Activated CD8-positive, alpha-beta T cell treated with anti-CD3 and anti-CD28 coated beads for 36 hours (primary cell): ENCODE measurements at regions of chr6 and their contacts with region 1.

Region 1: DNA sequence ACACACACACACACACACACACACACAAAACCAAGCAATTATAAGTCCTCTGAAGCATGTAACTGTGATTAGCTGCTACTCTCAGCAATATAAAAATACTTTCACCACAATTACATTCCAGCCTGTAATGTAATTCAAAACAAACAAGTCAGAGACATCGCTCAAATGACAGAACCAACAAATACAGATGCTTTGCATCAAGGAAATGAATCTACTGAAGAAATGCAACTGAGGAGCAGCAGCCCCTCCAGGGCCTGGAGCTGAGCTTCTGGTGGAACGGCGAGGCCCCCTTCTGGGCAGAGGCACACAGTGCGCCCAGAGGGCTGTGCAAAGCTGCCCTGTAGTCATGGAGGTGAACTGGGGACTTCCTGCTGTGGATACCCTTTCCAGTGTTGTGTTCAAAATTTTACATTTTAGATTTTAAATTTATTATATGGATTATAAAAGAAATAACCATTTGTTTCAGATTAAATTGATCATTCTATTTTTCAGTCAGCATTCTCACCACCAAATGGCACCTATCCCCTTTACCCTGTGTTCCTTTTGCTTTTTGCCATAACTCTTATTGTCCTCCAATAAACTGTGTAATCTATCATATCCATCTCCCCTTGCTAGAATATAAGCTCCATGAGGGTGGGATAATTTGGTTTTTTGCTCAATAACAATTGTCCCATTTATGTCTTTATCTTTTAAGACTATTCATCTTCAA is 23.2 kb downstream of the ADAT2 start:
- DNase-seq: peak; percentile 80
- ATAC-seq: peak; percentile 100
- H3K4me3 Mint-ChIP-seq: no peak overlapping the region
- H3K27ac Mint-ChIP-seq: no peak overlapping the region
- H3K4me1 Mint-ChIP-seq: peaks cover 5% of the 10 kb centered on the region
- H3K27me3 Mint-ChIP-seq: no peaks in the 10 kb centered on the region
- CTCF ChIP-seq: peak; percentile 95

Region 2: DNA sequence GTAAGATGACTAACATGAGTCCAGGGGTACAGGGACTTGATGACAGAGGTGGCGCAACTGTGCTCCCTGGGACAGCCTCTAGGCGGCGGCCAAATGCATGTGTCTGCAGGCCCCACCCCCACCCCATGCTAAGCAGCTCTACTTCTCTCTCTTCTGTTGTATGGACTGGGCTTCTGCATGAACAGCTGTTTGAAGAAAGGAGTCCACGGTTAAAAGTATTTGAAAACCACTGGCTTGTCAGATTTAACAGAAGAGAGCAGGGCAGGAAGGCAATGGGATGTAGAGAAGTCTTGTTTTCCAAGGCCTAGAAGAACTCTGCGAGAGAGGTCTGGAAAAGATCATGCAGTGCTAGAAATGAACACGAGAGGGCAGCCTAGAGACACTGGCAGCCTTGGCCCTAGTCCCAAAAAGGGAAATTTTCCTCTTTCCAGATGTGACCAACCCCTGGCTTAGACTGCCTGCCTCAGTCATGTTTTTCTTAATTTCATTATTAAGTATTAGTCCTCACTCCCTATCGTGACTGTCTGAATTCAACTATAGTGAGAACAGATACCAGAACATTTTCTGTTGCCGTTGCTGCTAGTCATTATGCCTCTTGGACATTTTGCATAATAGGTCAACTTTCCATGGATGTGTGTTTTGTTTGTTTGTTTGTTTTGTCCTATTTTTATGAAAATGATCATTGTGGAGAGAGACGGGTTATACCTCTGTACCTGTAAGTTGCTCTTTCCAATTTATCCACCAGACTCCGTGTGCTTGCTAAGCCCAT is 860.5 kb before region 1 on chr6:
- CTCF ChIA-PET with region 1: interaction called, 5 read pairs
- POLR2A ChIA-PET with region 1: no interaction called
- intact Hi-C with region 1: loop called (anchors 10 kb)
- DNase-seq: peak; percentile 68
- ATAC-seq: peak; percentile 66
- H3K4me3 Mint-ChIP-seq: no peak overlapping the region
- H3K27ac Mint-ChIP-seq: no peak overlapping the region
- H3K4me1 Mint-ChIP-seq: peaks cover 53% of the 10 kb centered on the region
- H3K27me3 Mint-ChIP-seq: no peaks in the 10 kb centered on the region
- CTCF ChIP-seq: peak; percentile 93

Region 3: DNA sequence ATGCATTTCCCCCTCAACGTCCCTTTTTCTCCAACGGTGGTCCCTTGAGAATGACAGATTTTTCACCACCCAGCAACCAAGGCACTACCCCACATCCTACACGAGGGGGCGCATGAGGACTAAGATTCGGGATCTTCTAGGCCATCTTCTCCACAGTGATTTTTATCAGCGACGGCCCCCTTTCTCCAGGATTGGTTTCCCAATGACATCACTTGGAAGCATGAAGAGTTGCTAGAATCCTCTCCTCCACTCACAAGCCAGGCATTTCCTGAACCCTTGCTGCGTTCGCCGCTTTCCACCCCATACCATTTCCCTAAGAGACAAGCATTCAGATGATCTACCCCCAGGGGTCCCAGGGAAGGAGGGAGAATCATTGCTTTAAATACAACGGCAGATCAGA is 734.3 kb before region 1 on chr6:
- CTCF ChIA-PET with region 1: interaction called, 19 read pairs
- POLR2A ChIA-PET with region 1: no interaction called
- intact Hi-C with region 1: no loop called
- DNase-seq: peak; percentile 73
- ATAC-seq: peak; percentile 84
- H3K4me3 Mint-ChIP-seq: no peak overlapping the region
- H3K27ac Mint-ChIP-seq: no peak overlapping the region
- H3K4me1 Mint-ChIP-seq: peaks cover 24% of the 10 kb centered on the region
- H3K27me3 Mint-ChIP-seq: no peaks in the 10 kb centered on the region
- CTCF ChIP-seq: peak; percentile 82

Region 4: GRCh38 chr6:143232849-143233248 is 194.4 kb before region 1 on chr6:
- CTCF ChIA-PET with region 1: interaction called, 11 read pairs
- POLR2A ChIA-PET with region 1: no interaction called
- intact Hi-C with region 1: no loop called
- DNase-seq: peak; percentile 61
- ATAC-seq: peak; percentile 45
- H3K4me3 Mint-ChIP-seq: no peak overlapping the region
- H3K27ac Mint-ChIP-seq: no peak overlapping the region
- H3K4me1 Mint-ChIP-seq: no peaks in the 10 kb centered on the region
- H3K27me3 Mint-ChIP-seq: no peaks in the 10 kb centered on the region
- CTCF ChIP-seq: peak; percentile 65

Region 5: DNA sequence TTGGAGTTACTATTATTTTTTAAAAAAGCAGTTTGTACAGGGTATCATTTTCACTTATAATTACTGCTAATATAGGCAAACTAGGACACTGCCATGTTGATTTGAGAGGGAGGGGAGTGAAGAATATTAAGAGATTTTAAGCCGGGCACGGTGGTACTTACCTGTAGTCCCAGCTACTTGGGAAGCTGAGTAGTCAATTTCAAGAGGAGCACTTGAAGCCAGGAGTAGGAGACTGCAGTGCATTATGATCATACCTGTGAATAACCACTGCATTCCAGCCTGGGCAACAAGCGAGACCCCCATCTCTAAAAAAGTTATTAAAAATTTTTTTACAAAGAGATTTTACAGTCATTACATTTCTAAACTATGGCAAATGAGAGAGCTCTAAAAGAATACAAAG is 12.5 kb before region 1 on chr6:
- CTCF ChIA-PET with region 1: interaction called, 18 read pairs
- POLR2A ChIA-PET with region 1: no interaction called
- intact Hi-C with region 1: no loop called
- DNase-seq: no peak
- ATAC-seq: no peak
- H3K4me3 Mint-ChIP-seq: no peak overlapping the region
- H3K27ac Mint-ChIP-seq: no peak overlapping the region
- H3K4me1 Mint-ChIP-seq: peaks cover 2% of the 10 kb centered on the region
- H3K27me3 Mint-ChIP-seq: no peaks in the 10 kb centered on the region
- CTCF ChIP-seq: no peak

Region 6: DNA sequence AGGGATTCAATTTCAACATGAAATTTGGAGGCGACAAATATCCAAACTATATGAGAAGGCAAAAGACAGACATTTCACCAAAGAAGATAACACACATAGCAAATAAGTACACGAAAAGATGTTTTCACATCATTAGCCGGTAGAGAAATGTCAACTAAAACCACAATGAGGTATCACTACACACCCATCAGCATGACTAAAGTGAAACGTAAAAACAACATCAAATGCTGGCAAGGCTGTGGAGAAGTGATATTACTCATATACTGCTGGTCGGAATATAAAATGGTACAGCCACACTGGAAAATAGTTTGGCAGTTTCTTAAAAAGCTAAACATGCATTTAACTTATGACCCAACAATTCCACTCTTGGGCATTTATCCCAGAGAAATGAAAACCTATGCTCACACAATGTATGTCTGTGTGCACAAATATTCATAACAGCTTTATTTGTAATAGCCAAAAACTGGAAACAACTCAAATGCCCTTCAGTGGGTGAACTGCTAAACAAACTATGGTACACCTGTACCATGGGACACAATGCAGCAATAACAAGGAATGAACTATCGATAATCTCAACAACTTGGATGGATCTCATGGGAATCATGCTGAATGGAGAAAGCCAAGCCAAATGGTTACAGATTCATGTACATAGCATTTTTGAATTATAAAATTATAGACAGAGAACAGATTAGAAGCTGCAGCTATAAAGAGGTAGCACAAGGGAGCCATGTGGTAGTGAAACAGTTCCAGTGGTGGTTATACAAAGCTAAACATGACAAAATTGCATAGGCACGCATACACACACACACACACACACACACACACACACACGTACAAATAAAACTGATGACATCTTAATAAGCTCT is 14.7 kb after region 1 on chr6:
- CTCF ChIA-PET with region 1: interaction called, 10 read pairs
- POLR2A ChIA-PET with region 1: no interaction called
- intact Hi-C with region 1: no loop called
- DNase-seq: peak; percentile 32
- ATAC-seq: peak; percentile 94
- H3K4me3 Mint-ChIP-seq: peak overlapping the region; percentile 47
- H3K27ac Mint-ChIP-seq: peak overlapping the region; percentile 93
- H3K4me1 Mint-ChIP-seq: peaks cover 63% of the 10 kb centered on the region
- H3K27me3 Mint-ChIP-seq: no peaks in the 10 kb centered on the region
- CTCF ChIP-seq: no peak

Region 7: DNA sequence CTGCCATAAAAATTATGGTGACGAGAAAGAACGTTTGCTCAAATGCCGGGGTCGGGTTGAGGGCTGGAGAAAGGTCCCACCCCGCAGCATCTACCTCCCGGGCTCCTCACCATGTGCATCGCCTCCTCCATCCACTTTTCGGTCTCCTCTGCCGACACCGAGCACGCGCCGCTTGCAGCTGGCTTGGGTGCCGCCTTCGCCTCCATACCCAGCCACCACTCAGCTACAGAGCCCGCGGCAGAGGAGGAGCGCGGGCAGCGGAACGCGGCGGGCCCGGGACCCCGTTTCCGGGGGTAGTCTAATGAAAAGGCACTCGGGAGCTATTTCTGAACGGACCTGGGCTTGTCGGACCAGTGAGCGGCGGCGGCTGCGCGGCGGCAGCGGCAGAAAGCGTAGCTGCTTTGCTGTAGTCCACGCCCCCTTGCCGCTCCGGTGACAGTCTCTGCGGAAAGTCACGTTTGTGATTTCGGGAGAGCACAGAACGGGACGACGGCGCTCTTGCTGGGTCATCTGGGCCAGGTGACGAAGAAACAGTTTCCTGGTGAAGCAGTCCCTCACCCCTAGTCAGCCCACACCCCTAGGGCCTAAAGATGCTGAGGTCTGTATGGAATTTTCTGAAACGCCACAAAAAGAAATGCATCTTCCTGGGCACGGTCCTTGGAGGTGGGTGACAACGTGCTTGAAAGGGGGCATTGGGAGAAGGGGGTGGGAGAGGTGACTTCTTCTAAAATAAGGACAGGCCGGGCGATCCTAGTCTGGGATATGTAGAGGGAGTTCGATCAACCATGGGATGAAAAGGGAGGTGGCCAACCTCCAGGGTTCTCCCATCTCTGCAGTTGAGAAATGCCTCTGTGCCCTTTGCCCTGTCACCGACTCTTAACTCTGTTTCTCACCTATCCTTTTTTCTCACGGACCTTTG is 23.4 kb after region 1 on chr6 and contains the starts of genes ADAT2 and PEX3:
- CTCF ChIA-PET with region 1: interaction called, 10 read pairs
- POLR2A ChIA-PET with region 1: no interaction called
- intact Hi-C with region 1: no loop called
- DNase-seq: peak; percentile 97
- ATAC-seq: peak; percentile 93
- H3K4me3 Mint-ChIP-seq: peak within 1 kb of the TSS; percentile 88
- H3K27ac Mint-ChIP-seq: peak within 1 kb of the TSS; percentile 99
- H3K4me1 Mint-ChIP-seq: peaks cover 43% of the 10 kb centered on the region
- H3K27me3 Mint-ChIP-seq: no peaks in the 10 kb centered on the region
- CTCF ChIP-seq: no peak
- total RNA-seq, gene ADAT2: 35.9 to 40.8 TPM
- total RNA-seq, gene PEX3: 24.9 to 33.6 TPM